ENCODE measurements at regions of chr10 and their contacts with region 1.

Region 1: DNA sequence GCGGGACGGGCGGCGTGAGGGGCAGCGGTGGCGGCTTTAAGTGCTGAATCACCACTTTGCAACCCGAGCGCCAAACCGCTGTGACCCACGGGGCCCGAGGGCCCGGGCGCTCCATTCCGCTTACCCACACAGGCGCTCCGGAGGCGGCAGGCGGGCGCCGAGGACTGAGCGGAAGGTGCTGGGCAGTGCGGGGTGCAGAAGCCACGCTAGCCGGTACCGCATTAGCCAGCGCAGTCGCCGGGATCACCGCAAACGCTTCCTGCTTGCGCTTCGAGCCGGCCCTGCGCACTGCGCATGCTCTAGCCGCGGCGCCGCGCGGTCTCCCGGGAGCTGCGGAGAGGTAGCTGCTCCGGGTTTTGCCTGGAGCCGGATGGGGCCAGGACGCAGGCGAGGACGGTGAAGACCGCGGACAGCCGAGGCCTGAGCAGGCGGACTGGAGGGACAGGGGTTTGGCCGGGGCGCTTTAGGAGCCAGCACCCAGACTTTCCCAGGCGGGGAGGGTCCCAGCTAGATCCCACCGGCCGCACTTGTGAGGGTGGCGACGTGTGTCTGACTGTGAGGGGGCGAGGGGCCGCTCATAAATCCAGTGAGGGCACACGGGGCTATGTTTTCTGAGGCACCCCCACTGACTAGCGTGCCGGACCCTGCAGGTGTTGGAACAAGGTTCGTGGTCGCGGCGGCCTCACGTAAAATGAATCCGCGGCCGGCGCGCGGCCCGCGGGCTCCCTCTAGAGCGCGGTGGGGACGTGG is at the start of gene IDE:
- DNase-seq: peak; percentile 90
- H3K4me3 Mint-ChIP-seq: peak within 1 kb of the TSS; percentile 56
- H3K27ac Mint-ChIP-seq: peak within 1 kb of the TSS; percentile 85
- H3K4me1 Mint-ChIP-seq: peaks cover 34% of the 10 kb centered on the region
- H3K27me3 Mint-ChIP-seq: no peaks in the 10 kb centered on the region
- total RNA-seq, gene IDE: 32.3 to 40.1 TPM

Region 2: DNA sequence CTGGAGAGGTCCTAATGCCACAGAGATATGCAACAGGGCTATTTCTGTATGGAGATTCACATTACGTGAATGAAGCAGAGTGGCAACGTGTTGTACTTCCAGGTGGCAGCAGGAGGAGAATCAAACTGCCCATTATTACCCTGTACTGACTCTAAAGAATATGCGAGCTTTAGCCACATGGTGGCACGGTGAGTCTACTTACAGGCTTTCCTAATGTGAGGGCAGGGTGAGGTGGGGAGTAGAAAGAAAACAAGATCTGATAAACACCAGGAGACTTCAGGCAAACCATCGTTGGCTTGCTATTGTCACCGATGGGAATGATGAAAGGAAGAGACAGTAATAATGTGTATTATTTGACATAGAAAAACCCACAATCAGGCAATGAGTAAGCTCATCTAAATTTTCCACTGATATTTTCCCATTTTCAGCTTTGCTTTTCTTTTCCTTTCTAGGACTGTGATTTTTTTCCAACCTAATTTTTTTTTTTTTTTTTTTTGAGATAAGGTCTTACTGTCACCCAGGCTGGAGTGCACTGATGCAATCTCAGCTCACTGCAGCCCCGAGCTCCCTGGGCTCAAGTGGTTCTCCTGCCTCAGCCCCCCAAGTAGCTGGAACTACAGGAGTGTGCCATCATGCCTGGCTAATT is 486.1 kb before region 1 on chr10:
- CTCF ChIA-PET with region 1: no interaction called
- POLR2A ChIA-PET with region 1: interaction called, 3 read pairs
- intact Hi-C with region 1: loop called (anchors 5 kb)
- DNase-seq: peak; percentile 72
- H3K4me3 Mint-ChIP-seq: no peak overlapping the region
- H3K27ac Mint-ChIP-seq: no peak overlapping the region
- H3K4me1 Mint-ChIP-seq: peaks cover 10% of the 10 kb centered on the region
- H3K27me3 Mint-ChIP-seq: no peaks in the 10 kb centered on the region

Region 3: GRCh38 chr10:92432596-92432995 is 141.4 kb before region 1 on chr10:
- CTCF ChIA-PET with region 1: no interaction called
- POLR2A ChIA-PET with region 1: no interaction called
- intact Hi-C with region 1: no loop called
- DNase-seq: no peak
- H3K4me3 Mint-ChIP-seq: no peak overlapping the region
- H3K27ac Mint-ChIP-seq: no peak overlapping the region
- H3K4me1 Mint-ChIP-seq: no peaks in the 10 kb centered on the region
- H3K27me3 Mint-ChIP-seq: no peaks in the 10 kb centered on the region

Region 4: GRCh38 chr10:92517034-92517655 is 56.8 kb before region 1 on chr10:
- CTCF ChIA-PET with region 1: interaction called, 183 read pairs
- POLR2A ChIA-PET with region 1: interaction called, 14 read pairs
- intact Hi-C with region 1: loop called (anchors 1 kb)
- DNase-seq: peak; percentile 66
- H3K4me3 Mint-ChIP-seq: no peak overlapping the region
- H3K27ac Mint-ChIP-seq: no peak overlapping the region
- H3K4me1 Mint-ChIP-seq: peaks cover 6% of the 10 kb centered on the region
- H3K27me3 Mint-ChIP-seq: no peaks in the 10 kb centered on the region

Region 5: DNA sequence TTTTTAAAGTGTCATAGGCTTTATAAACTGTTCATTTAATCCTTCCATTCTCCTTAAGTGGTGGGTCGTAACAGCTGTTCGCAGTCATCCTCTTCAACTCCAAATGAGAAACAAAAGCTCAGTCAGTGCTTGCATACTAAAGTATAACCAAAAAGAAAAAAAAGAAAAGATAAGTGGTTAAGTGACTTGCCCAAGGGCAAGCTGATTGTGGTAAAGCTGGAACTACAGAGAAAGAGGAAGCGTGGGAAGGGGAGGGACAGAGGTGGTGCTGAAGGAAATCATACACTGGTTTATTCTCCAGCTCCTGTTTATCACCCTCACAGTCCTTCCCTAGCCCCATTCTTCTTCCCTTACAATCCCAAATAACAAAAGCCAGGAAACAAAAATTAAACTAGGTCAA is 29.7 kb before region 1 on chr10:
- CTCF ChIA-PET with region 1: interaction called, 17 read pairs
- POLR2A ChIA-PET with region 1: no interaction called
- intact Hi-C with region 1: no loop called
- DNase-seq: no peak
- H3K4me3 Mint-ChIP-seq: no peak overlapping the region
- H3K27ac Mint-ChIP-seq: no peak overlapping the region
- H3K4me1 Mint-ChIP-seq: peaks cover 31% of the 10 kb centered on the region
- H3K27me3 Mint-ChIP-seq: no peaks in the 10 kb centered on the region

Measured in activated CD4-positive, alpha-beta memory T cell treated with anti-CD3 and anti-CD28 coated beads for 36 hours (primary cell).